ENCODE measurements at regions of chr5 and their contacts with region 1.

Region 1: GRCh38 chr5:158174918-158175851 is 316.2 kb upstream of the CLINT1 start:
- DNase-seq: peak; percentile 28
- H3K4me3 ChIP-seq: no peak overlapping the region
- CTCF ChIP-seq: peak; percentile 81

Region 2: DNA sequence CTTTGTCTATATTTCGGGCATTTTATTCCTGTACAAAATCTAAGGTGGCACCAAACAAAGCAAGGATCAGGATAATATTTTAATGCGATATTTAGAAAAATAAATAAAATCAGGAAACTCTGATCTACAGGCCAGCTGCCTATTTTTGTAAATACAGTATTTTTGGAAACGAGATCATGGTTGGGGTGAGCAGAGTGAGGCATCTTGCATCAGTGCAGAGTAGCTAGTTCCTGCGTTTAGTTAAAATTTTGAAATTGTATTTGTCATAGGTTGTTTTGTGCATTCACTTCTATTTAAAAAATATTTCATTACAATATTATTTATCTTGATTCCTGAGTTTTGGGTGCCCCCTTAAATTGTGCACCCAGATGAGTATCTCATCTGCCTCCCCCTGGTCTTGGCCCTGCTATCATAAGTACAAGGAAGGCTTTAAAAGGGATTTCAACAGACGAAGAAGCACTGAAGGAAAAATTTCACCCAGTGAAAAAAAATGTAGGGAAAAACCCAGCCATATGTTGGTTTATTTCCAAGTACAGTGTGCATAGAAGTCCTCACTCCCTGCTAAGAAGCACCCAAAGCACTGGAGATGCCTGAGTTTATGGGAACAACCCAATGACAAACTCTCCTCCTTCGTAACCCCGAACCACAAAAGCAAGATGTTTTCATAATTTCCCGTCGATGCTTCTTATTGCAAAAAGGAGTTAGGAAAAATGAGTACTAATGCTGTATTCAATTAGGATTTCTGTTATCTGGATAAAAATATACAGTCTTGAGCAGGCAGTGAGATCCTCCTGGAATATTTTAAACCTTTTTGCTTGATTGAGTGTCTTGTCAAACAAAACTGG is 11.5 kb before region 1 on chr5:
- CTCF ChIA-PET with region 1: interaction called, 14 read pairs
- POLR2A ChIA-PET with region 1: no interaction called
- DNase-seq: no peak
- H3K4me3 ChIP-seq: no peak overlapping the region
- CTCF ChIP-seq: no peak

Region 3: GRCh38 chr5:158679221-158679641 is 504.0 kb after region 1 on chr5:
- CTCF ChIA-PET with region 1: interaction called, 22 read pairs
- POLR2A ChIA-PET with region 1: no interaction called
- DNase-seq: no peak
- H3K4me3 ChIP-seq: no peak overlapping the region
- CTCF ChIP-seq: no peak

Region 4: GRCh38 chr5:159112436-159112835 is 937.3 kb after region 1 on chr5:
- CTCF ChIA-PET with region 1: interaction called, 74 read pairs
- POLR2A ChIA-PET with region 1: no interaction called
- DNase-seq: no peak
- H3K4me3 ChIP-seq: no peak overlapping the region
- CTCF ChIP-seq: no peak

Region 5: GRCh38 chr5:159133041-159133741 is 958.0 kb after region 1 on chr5:
- CTCF ChIA-PET with region 1: interaction called, 38 read pairs
- POLR2A ChIA-PET with region 1: no interaction called
- DNase-seq: peak; percentile 40
- H3K4me3 ChIP-seq: no peak overlapping the region
- CTCF ChIP-seq: peak; percentile 50

Measured in AG04449 (cell line).